Posterior cingulate gyrus (tissue), 11 donors: ENCODE measurements at regions of chr9 and their contacts with region 1.

Region 1: DNA sequence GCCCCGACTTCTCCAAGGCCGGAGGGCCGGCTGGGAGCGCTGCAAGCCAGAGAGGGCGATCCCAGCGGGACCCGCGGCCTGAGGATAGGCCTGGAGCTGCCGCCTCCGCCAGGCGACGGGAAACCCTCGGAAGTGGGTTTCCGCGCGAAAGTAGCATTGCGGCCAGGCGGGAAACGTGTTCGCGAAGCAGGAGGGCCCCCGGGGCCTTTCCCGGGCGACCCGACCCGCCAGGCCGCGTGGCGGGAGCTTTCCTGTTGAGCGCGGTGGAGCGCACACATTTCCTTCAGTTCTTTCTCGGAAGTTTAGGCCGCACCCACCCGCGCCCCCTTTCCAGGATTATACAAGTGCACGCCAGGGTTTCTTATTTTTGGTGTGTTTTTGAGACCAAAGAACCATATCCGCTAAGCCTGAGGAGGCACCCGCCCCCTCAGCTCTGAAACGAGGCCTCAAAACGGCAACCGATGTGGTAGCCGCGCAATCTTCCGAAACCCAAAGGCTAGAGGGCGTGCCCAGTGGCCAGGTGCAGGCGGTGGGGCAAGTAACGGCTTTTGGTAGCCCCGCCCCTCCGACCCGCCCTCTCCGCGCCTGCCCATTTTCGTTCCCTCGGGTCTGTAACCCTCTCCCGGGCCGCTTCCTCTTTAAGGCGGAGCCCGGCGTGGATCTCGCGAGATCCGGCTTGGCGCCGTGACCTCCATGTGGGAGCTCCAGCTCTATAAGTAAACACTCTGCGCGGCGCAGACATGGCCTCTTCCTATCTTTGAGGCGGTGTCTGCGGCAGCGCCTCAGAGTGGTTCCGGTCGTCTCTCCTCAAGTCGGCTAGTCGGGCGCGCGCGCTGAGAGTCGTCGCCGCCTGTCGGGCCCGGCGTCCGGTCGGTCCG is at the start of gene UHRF2:
- DNase-seq: peak; percentile 94 to 99 (median 98)

Region 2: GRCh38 chr9:6566409-6567139 is 153.8 kb after region 1 on chr9:
- intact Hi-C with region 1: loop called (anchors 5 kb)
- DNase-seq: peak in 3 of 10 donors; percentile 16 to 32 (median 31)